ENCODE measurements at regions of chr3 and their contacts with region 1.

Region 1: GRCh38 chr3:63429905-63430304 is 151.8 kb downstream of the SYNPR start:
- DNase-seq: no peak
- ATAC-seq: no peak
- H3K4me3 ChIP-seq: no peak overlapping the region
- H3K4me3 Mint-ChIP-seq: no peak overlapping the region
- H3K27ac ChIP-seq: no peak overlapping the region
- H3K27ac Mint-ChIP-seq: no peak overlapping the region
- H3K4me1 ChIP-seq: no peaks in the 10 kb centered on the region
- H3K4me1 Mint-ChIP-seq: no peaks in the 10 kb centered on the region
- H3K27me3 ChIP-seq: no peaks in the 10 kb centered on the region
- H3K27me3 Mint-ChIP-seq: peaks cover 0 to 6% of the 10 kb centered on the region in 2 donors

Region 2: GRCh38 chr3:62665598-62666437 is 764.1 kb before region 1 on chr3:
- CTCF ChIA-PET with region 1: no interaction called
- POLR2A ChIA-PET with region 1: interaction called in 1 of 2 experiments, 12 read pairs
- DNase-seq: peak in 6 of 35 experiments; percentile 1
- ATAC-seq: no peak
- H3K4me3 ChIP-seq: no peak overlapping the region
- H3K4me3 Mint-ChIP-seq: no peak overlapping the region
- H3K27ac ChIP-seq: no peak overlapping the region
- H3K27ac Mint-ChIP-seq: no peak overlapping the region
- H3K4me1 ChIP-seq: no peaks in the 10 kb centered on the region
- H3K4me1 Mint-ChIP-seq: no peaks in the 10 kb centered on the region
- H3K27me3 ChIP-seq: no peaks in the 10 kb centered on the region
- H3K27me3 Mint-ChIP-seq: no peaks in the 10 kb centered on the region

Region 3: GRCh38 chr3:63413523-63413922 is 16.4 kb before region 1 on chr3:
- CTCF ChIA-PET with region 1: no interaction called
- POLR2A ChIA-PET with region 1: no interaction called
- DNase-seq: no peak
- ATAC-seq: no peak
- H3K4me3 ChIP-seq: no peak overlapping the region
- H3K4me3 Mint-ChIP-seq: no peak overlapping the region
- H3K27ac ChIP-seq: no peak overlapping the region
- H3K27ac Mint-ChIP-seq: no peak overlapping the region
- H3K4me1 ChIP-seq: no peaks in the 10 kb centered on the region
- H3K4me1 Mint-ChIP-seq: no peaks in the 10 kb centered on the region
- H3K27me3 ChIP-seq: no peaks in the 10 kb centered on the region
- H3K27me3 Mint-ChIP-seq: no peaks in the 10 kb centered on the region

Measured in T-cell (primary cell).